GM13976 (cell line): ENCODE measurements at regions of chr4 and their contacts with region 1.

Region 1: GRCh38 chr4:41887821-41888686 is 47.2 kb upstream of the TMEM33 start:
- DNase-seq: no peak
- CTCF ChIP-seq: peak; percentile 59

Region 2: GRCh38 chr4:41692717-41693345 is 195.2 kb before region 1 on chr4:
- in situ Hi-C with region 1: loop called (anchors 5 kb)
- DNase-seq: peak; percentile 23
- CTCF ChIP-seq: peak; percentile 81

Region 3: DNA sequence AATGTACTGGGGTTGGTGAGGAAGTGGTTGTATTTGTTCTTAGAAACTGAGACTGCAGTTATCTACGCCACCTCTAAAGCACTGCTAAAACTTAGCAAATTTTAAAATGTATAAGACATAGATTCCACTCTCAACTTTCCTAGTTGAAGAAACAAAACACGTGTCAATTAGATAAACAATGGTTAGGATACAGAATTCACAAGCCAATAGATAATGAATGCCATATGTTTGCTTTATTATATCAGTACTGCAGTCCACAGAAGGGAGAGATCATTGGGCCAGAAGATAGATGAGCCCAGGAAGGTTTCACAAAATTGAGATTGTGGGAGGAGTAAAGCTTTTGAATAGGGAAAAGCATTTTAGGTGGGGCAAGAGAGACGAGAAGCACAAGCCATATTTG is 61.5 kb after region 1 on chr4:
- in situ Hi-C with region 1: no loop called
- DNase-seq: no peak
- CTCF ChIP-seq: no peak